Activated naive CD4-positive, alpha-beta T cell treated with anti-CD3 and anti-CD28 coated beads for 36 hours (primary cell): ENCODE measurements at regions of chr6 and their contacts with region 1.

Region 1: GRCh38 chr6:118618679-118619377 is 32.6 kb downstream of the CEP85L start:
- DNase-seq: peak; percentile 81
- H3K4me3 Mint-ChIP-seq: no peak overlapping the region
- H3K27ac Mint-ChIP-seq: no peak overlapping the region
- H3K4me1 Mint-ChIP-seq: peaks cover 50% of the 10 kb centered on the region
- H3K27me3 Mint-ChIP-seq: no peaks in the 10 kb centered on the region

Region 2: DNA sequence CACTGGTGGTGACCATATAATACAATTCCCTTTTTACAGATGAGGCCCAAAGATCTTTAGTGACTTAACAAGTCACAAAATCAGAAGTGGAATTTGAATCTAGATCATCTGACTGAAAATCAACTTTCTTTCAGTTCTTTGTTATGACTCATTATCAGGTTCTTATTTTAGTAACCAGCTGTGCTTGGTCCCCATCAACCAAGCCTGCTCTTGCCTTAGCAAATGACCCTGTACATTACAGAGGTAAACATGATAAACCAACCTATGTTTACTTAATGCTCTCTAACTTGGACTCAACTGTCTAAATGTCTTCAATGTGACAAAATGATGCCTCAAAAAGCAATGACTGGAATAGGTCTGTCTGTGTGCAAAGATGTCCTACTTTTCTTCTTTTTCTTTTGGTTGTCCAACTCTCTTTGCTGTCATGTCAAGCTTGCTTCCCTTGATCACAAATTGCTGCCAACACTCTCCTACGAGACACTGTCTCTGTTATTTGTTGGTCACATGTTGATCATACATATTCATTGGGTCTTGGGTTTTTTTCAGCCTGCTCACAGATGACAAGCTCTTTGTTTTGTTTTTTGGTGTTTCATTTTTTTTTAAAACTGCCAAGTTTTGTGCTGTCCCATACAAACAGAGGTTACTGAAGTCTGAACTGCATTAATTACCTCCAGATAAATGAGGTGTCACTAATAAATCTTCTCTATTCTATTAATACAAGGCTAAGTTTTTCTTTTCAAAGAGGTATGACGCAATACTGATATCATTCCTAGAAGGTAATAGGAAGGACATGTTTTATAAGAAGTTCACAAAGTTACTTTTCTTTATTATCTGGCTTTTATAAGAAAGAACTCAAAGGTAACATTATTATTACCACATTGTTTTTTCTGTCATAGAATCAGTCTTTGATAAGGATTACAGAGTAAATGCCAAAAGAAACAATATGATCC is 133.0 kb before region 1 on chr6:
- CTCF ChIA-PET with region 1: no interaction called
- intact Hi-C with region 1: loop called (anchors 5 kb)
- DNase-seq: peak; percentile 13
- H3K4me3 Mint-ChIP-seq: no peak overlapping the region
- H3K27ac Mint-ChIP-seq: no peak overlapping the region
- H3K4me1 Mint-ChIP-seq: peaks cover 27% of the 10 kb centered on the region
- H3K27me3 Mint-ChIP-seq: no peaks in the 10 kb centered on the region

Region 3: DNA sequence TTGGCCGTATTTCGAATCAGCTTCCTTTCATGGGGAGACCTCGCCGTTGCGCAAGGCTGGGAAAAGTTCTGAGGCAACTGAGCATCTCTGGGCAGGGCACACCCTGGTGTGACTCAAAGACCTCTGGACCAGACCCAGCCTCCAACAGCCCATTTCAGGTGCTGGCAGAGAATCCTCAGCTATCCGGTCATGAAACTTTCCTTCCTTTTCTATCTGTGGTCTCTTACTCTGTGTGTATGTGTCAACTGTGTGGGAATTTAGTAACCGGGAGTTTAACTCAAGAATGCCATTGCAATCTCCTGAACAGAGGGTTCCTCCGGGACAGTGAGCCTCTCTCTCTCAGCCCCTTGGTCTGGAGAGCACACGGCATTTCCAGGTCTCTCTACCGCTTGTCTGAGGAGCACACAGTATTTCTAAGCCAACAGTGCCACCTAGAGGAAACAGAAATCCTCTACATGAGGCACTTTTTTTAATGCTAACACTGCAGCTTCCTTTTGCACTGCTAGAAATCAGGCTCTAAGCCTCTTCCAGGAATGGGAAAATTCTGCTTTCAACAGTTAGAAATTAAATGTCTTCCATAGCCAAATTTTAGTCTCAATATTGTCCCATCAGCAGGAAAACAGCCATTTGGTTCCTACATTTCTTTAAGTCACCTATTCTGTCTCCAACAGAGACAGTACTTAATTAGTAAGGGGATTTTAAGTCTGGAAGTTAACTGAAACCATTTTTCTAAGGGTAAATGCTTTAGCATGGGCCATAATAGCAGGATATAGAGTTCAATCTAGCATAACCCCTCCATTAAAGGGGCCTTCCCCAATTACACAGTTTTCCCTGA is 38.0 kb before region 1 on chr6:
- CTCF ChIA-PET with region 1: no interaction called
- intact Hi-C with region 1: loop called (anchors 2 kb)
- DNase-seq: peak; percentile 26
- H3K4me3 Mint-ChIP-seq: no peak overlapping the region
- H3K27ac Mint-ChIP-seq: peak overlapping the region; percentile 58
- H3K4me1 Mint-ChIP-seq: peaks cover 2% of the 10 kb centered on the region
- H3K27me3 Mint-ChIP-seq: no peaks in the 10 kb centered on the region

Region 4: GRCh38 chr6:118660218-118660569 is 41.4 kb after region 1 on chr6:
- CTCF ChIA-PET with region 1: no interaction called
- intact Hi-C with region 1: no loop called
- DNase-seq: peak; percentile 65
- H3K4me3 Mint-ChIP-seq: peak overlapping the region; percentile 44
- H3K27ac Mint-ChIP-seq: peak overlapping the region; percentile 84
- H3K4me1 Mint-ChIP-seq: peaks cover 69% of the 10 kb centered on the region
- H3K27me3 Mint-ChIP-seq: no peaks in the 10 kb centered on the region